ENCODE measurements at regions of chrX and their contacts with region 1.

Region 1: GRCh38 chrX:14095702-14096101 is 66.0 kb upstream of the GEMIN8 start:
- DNase-seq: no peak
- H3K4me3 ChIP-seq: no peak overlapping the region
- CTCF ChIP-seq: peak; percentile 63

Region 2: DNA sequence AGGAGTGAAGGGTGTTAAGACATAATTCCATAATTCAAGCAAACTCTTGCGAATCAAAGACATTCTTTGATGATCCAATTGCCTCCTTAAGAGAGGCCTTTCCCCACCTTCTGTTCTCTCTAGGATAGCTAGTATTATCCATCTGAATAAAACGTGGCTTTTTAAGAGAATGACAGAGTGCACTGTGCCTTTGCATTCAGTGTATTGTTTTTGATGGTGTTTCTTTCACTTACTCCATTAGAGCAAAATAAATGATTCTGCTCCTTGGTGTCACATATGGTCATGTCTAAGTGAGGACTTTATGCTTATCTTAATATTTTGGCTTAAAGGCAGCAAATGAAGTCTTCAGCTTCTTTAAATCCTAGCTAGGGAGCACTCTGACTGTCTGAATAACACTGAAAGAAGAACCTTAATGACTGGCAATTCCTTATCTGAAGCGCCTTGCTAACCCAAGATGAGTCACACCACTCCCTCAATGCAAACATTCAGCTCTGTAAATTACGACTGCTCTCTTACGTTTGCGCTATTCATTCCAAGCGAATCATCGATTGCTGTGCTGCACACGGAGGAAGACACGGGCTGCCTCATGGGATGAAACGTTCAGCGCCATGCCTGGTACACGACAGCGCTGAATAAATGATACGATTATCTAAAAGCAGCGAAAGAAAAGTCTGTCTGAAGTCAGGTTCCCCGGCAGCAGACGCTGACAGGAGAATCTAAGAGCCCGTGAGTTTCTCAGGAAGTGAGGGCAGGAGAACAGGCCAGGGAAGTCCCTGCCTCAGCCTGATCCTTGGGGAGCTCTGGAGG is 30.9 kb before region 1 on chrX:
- CTCF ChIA-PET with region 1: no interaction called
- POLR2A ChIA-PET with region 1: no interaction called
- DNase-seq: peak; percentile 5
- H3K4me3 ChIP-seq: no peak overlapping the region
- CTCF ChIP-seq: no peak

Region 3: DNA sequence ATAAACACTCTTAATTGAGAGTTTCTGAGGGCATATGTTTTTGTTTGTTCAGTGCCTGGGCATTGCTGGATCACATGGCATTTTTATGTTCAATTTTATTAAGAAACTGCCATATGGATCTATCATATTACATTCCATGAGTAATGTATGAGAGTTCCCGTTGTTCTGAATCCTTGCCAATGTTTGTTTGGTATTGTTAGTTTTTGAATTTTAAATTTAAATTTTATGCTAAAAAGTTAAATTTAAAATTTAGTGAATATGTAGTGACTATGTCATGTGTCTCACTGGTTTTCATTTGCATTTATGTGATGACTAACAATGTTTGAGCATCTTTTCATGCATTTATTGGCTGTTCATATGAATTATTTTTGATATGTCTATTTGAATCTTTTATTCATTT is 11.2 kb before region 1 on chrX:
- CTCF ChIA-PET with region 1: no interaction called
- POLR2A ChIA-PET with region 1: no interaction called
- DNase-seq: no peak
- H3K4me3 ChIP-seq: no peak overlapping the region
- CTCF ChIP-seq: no peak

Region 4: GRCh38 chrX:14490136-14490535 is 394.4 kb after region 1 on chrX:
- CTCF ChIA-PET with region 1: no interaction called
- POLR2A ChIA-PET with region 1: no interaction called
- DNase-seq: no peak
- H3K4me3 ChIP-seq: no peak overlapping the region
- CTCF ChIP-seq: no peak

Region 5: GRCh38 chrX:14528629-14529289 is 433.1 kb after region 1 on chrX:
- CTCF ChIA-PET with region 1: interaction called, 13 read pairs
- POLR2A ChIA-PET with region 1: no interaction called
- DNase-seq: no peak
- H3K4me3 ChIP-seq: no peak overlapping the region
- CTCF ChIP-seq: peak; percentile 30

Region 6: DNA sequence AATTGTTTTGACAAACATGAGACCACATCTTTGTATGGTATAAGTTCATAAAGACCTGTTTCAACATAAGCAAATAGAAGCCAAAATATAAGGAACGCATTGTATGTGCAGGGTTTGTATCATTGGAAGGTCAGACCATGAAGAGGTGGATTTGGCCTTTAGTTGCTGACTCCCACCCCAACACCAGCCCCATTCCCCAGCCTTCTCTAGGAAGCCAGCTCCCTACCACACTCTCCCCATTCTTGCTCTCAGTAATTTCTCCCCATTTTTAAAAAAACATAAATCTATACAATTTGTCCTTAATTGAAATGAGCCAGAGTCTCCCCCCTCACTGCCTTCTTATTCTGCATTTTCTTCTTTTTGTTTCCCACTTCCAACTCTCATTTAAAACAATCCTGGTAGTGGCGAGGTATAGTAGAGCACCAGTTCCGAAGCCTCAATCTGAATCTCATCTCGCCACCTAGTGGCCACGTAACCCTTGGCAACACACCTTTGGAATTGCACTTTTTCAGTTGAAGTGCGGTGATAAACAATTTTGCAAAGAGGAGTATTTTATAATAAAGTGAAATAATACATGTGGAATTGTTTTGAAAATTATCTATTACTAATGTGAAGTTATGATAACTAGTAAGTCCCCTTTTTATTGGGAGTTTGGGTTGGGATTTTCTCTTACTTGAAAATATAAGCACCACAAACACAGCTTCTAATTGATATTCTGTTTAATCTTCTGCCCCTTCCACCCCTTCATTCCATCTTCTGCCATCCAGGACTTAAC is 1047.5 kb after region 1 on chrX:
- CTCF ChIA-PET with region 1: interaction called, 17 read pairs
- POLR2A ChIA-PET with region 1: no interaction called
- DNase-seq: no peak
- H3K4me3 ChIP-seq: no peak overlapping the region
- CTCF ChIP-seq: peak; percentile 60

Measured in AG04449 (cell line).